MCF 10A (cell line): ENCODE measurements at regions of chr1 and their contacts with region 1.

Region 1: GRCh38 chr1:64268653-64269557 is 65.5 kb downstream of the UBE2U start:
- DNase-seq: peak; percentile 84
- H3K4me3 Mint-ChIP-seq: no peak overlapping the region
- H3K27ac Mint-ChIP-seq: no peak overlapping the region
- H3K4me1 Mint-ChIP-seq: peaks cover 3% of the 10 kb centered on the region
- H3K27me3 Mint-ChIP-seq: no peaks in the 10 kb centered on the region
- CTCF ChIP-seq: peak; percentile 87

Region 2: DNA sequence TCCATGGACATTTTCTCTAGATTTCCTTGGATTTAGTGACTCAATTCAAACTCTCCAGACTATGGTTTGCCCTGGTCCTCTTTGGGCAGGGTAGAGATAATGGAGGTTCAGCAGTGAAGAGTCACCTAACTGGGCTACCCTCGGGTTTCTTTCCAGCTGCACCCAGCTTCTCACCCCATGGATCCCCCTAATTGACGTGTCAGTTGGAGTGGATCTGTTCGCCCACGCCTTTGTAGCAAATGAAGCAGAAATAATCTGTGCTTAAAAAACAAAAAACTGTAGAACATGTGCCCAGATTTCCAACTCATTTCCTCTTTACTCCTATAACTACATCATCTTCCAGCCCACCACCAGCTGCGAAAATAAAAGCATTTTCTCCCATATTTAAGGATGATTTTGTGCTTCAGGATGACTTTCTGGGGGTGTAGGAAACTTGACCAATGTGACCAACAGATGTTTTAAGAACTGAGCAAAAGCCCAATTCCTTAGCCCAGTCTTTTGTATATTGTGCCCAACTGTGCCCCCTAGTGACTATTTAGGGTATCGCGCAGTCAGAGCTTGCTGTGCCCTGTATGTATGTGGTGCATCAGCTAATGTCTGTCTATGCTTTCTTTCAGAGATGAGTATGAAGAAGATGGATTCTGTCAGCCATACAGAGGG is 132.0 kb before region 1 on chr1:
- CTCF ChIA-PET with region 1: no interaction called
- POLR2A ChIA-PET with region 1: no interaction called
- intact Hi-C with region 1: no loop called
- DNase-seq: peak; percentile 85
- H3K4me3 Mint-ChIP-seq: no peak overlapping the region
- H3K27ac Mint-ChIP-seq: peak overlapping the region; percentile 27
- H3K4me1 Mint-ChIP-seq: peaks cover 23% of the 10 kb centered on the region
- H3K27me3 Mint-ChIP-seq: no peaks in the 10 kb centered on the region
- CTCF ChIP-seq: peak; percentile 77

Region 3: DNA sequence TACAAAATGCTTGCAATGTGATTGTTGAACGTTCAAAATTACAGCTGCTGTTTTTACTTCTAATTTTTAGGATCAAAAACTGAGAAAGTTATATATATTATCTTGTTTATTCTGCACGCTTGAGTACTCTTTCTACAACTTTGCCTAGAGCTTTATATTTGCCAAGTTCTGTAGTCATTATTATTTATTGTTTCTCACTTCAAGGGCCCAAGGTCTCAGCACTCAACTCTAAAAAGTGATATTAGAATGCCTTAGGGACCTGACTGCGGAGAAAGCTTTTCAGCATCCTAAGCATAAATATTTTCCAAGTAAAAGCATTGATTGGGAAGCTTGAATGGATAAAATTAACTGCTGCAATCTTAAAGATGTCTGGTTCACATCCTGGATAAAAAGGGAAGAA is 18.2 kb after region 1 on chr1:
- CTCF ChIA-PET with region 1: interaction called, 13 read pairs
- POLR2A ChIA-PET with region 1: no interaction called
- intact Hi-C with region 1: no loop called
- DNase-seq: no peak
- H3K4me3 Mint-ChIP-seq: no peak overlapping the region
- H3K27ac Mint-ChIP-seq: no peak overlapping the region
- H3K4me1 Mint-ChIP-seq: peaks cover under 1% of the 10 kb centered on the region
- H3K27me3 Mint-ChIP-seq: no peaks in the 10 kb centered on the region
- CTCF ChIP-seq: no peak

Region 4: GRCh38 chr1:64543831-64544230 is 274.9 kb after region 1 on chr1:
- CTCF ChIA-PET with region 1: no interaction called
- POLR2A ChIA-PET with region 1: no interaction called
- intact Hi-C with region 1: no loop called
- DNase-seq: peak; percentile 23
- H3K4me3 Mint-ChIP-seq: no peak overlapping the region
- H3K27ac Mint-ChIP-seq: no peak overlapping the region
- H3K4me1 Mint-ChIP-seq: peaks cover 11% of the 10 kb centered on the region
- H3K27me3 Mint-ChIP-seq: no peaks in the 10 kb centered on the region
- CTCF ChIP-seq: no peak

Region 5: DNA sequence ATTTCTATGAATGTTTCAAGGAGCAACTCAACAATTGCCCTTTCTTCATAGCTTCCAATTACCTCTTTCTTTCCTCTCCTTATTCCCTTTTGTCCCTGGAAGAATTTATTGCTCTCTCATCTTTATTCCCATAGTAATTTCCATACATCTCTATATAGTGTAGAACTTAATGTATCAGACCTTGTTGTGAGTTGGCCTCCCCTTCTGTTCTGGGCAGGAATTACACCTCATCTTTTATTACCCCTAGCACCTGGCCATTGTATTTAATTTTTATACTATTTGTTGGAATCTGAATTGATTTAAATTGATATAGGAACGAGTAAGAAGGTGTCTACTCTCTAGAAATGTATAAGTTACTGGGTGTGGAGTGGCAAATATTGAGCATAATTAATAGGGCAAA is 315.6 kb after region 1 on chr1:
- CTCF ChIA-PET with region 1: interaction called, 4 read pairs
- POLR2A ChIA-PET with region 1: no interaction called
- intact Hi-C with region 1: loop called (anchors 2 kb)
- DNase-seq: peak; percentile 25
- H3K4me3 Mint-ChIP-seq: no peak overlapping the region
- H3K27ac Mint-ChIP-seq: no peak overlapping the region
- H3K4me1 Mint-ChIP-seq: no peaks in the 10 kb centered on the region
- H3K27me3 Mint-ChIP-seq: no peaks in the 10 kb centered on the region
- CTCF ChIP-seq: peak; percentile 31

Region 6: DNA sequence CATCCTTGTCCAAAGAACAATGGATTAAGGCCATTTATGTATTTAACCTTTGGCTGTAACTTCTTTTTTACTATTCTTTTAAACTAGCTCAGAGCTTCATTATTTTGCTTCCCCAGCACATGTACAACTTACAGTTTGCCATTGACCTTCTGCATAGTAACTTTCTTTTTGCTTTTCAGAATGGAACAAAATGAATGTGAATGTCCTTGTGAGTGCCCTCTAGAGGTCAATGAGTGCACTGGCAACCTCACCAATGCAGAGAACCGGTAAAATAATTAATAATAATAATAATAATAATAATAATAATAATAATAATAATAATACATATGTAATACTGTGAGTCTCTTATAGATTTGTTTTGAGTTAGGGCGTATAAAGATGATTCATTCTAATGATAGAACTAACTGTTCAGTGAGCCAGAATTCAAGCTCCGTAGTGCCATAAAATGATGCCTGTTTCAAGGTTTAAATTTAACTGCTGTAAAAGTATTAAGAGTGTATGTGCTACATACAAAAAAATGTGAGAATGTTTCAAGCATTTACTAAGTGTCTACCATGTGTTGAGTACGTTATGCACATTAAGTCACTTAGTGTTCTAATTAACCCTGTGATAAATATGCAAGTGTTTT is 406.9 kb after region 1 on chr1:
- CTCF ChIA-PET with region 1: interaction called, 41 read pairs
- POLR2A ChIA-PET with region 1: interaction called, 3 read pairs
- intact Hi-C with region 1: loop called (anchors 1 kb)
- DNase-seq: peak; percentile 32
- H3K4me3 Mint-ChIP-seq: no peak overlapping the region
- H3K27ac Mint-ChIP-seq: no peak overlapping the region
- H3K4me1 Mint-ChIP-seq: no peaks in the 10 kb centered on the region
- H3K27me3 Mint-ChIP-seq: no peaks in the 10 kb centered on the region
- CTCF ChIP-seq: peak; percentile 54

Region 7: DNA sequence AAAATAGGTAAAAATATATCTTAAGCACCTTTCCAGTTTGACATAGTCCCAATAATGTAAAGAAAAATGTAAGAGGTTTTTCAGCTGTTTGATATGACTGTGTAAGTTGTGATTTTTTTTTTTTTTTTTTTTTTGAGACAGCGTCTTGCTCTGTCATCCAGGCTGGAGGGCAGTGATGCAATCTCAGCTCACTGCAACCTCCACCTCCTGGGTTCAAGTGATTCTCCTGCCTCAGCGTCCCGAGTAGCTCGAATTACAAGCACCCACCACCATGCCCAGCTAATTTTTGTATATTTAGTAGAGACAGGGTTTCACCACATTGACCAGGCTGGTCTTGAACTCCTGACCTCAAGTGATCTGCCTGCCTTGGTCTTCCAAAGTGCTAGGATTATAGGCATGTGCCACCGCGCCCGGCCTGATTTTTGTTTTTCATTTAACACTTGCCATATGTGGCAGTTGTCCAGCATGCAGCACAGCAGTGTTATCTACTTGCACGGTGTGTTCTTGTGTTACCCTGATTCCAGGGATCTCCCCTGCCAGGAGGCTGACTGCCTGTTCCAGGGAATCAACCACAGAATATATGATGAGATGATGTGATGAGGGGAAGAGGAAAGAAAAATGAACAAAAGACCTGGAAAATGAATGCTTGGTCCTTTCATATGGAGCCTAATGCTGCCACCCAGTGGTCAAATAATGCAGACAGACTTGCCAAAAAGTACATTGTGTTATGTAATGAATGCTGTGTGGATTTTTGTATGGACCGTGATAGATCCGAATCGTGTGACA is 555.0 kb after region 1 on chr1:
- CTCF ChIA-PET with region 1: interaction called, 14 read pairs
- POLR2A ChIA-PET with region 1: interaction called, 4 read pairs
- intact Hi-C with region 1: loop called (anchors 1 kb)
- DNase-seq: peak; percentile 88
- H3K4me3 Mint-ChIP-seq: no peak overlapping the region
- H3K27ac Mint-ChIP-seq: peak overlapping the region; percentile 66
- H3K4me1 Mint-ChIP-seq: peaks cover 18% of the 10 kb centered on the region
- H3K27me3 Mint-ChIP-seq: no peaks in the 10 kb centered on the region
- CTCF ChIP-seq: peak; percentile 64